Activated CD4-positive, alpha-beta memory T cell treated with anti-CD3 and anti-CD28 coated beads for 36 hours (primary cell): ENCODE measurements at regions of chr1 and their contacts with region 1.

Region 1: DNA sequence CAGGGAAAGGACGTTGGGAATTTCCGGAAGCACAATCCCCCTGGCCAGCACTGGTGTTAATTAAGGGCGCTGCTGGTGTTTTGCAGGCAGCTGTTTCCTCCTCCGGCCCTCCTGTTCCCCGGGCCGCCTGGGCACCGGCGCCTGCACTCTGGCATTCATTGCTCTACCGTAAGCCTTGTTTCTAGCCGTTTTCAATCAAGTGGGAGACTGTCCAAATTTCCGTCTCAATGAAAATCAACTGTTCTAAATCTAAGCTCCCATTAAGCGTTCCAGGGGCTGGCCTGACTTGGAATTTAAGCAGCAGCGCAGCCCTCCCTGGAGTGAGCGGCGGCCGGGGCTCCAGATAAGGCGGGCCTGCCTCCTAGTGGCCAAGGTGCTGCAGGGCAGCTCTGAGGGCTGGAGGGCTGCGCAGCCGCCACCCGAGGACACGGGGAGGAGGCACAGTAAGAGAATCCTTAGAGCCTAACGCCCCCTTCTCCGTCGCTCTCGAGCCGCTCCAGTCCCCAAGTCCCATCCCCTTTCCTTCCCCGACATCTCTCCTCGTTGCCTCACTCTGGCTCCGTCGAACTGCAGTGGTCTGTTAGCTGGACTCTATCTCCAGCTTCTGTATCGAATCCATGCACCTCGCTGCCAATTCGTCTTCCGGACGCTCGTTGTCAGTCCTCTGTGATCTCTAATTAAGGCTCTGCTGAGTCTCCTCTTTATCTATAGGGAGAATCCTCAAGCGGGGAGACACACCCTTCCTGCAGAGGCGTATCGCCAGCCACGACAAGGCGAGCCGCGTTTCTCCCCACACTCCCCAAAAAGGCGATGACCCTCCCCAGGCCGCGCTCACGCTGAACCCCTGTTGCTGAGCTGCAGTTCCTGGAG is 57.8 kb upstream of the LRRC8D start:
- DNase-seq: peak; percentile 91
- H3K4me3 Mint-ChIP-seq: peak overlapping the region; percentile 72
- H3K27ac Mint-ChIP-seq: peak overlapping the region; percentile 80
- H3K4me1 Mint-ChIP-seq: peaks cover 46% of the 10 kb centered on the region
- H3K27me3 Mint-ChIP-seq: no peaks in the 10 kb centered on the region

Region 2: DNA sequence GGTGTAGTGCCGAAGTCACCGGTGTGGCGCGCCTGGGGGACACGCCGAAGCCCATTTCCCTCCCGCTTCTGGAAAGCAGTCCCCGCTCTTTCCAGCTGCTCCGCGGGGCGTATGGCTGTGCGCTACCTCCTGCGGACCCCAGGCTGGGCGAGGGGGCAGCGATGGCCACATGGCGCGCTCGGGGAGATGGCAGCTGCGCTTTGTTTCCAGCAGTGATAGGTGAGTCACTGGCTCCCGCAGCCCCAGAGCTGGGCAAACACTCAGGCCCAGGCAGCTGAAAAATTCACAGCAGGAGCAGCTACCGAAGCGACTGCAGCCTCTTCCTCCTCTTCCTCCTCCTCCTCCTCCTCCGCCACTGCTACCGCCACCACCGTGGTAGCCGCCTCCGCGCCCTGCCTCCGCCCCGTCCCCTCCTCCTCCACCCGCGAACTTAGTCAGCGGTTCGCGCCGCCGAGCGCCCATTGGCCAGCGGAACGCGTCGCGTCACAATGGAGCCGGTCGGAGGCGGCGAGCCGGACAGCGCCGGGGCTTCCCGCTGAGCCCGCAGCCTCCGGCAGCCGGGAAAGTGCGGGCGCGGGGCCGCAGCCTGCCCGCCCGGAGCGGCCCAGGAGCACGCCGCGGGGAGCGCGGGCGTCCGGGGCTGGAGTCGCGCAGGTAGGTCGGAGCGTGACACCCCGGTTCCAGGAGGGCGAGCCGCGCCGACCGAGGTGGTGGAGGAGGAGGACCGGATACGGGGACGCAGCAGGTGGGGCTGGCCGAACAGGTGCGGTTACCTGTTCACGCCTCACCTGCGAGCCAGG is 238.4 kb before region 1 on chr1 and contains the start of gene LRRC8B:
- CTCF ChIA-PET with region 1: interaction called, 18 read pairs
- POLR2A ChIA-PET with region 1: interaction called, 3 read pairs
- intact Hi-C with region 1: loop called (anchors 1 kb)
- DNase-seq: peak; percentile 93
- H3K4me3 Mint-ChIP-seq: no peak within 1 kb of the TSS
- H3K27ac Mint-ChIP-seq: no peak within 1 kb of the TSS
- H3K4me1 Mint-ChIP-seq: peaks cover 31% of the 10 kb centered on the region
- H3K27me3 Mint-ChIP-seq: no peaks in the 10 kb centered on the region
- total RNA-seq, gene LRRC8B: 41.1 to 42.1 TPM

Region 3: DNA sequence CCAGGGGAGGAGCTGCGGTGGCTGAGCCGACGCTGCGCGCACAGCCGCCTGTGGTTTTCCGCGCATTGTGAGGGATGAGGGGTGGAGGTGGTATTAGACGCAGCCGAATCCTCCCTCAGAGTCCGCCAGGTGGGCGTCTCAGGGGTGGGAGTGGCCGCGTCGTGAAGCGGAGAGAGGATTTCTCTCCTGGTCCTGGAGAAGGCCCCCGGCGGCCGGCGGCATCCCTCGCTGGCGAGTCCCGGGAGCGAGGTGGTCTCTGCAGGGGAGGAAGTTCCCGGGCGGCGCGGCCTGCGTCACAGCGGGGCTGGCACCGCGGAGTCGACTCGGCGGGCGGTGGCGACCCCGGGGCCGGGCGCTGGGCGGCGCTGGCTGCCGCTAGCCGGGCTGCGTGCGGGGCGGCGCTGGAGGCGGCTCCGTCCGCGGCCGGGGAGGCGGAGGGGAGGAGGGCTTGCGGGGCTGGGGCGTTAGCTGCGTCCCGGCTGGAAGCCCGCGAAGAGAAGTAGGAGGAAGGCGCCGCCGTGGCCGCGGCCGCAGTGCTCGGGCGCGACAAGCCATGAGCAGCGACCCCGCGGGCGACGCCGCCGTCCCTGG is 130.3 kb before region 1 on chr1 and contains the start of gene LRRC8C:
- CTCF ChIA-PET with region 1: interaction called, 154 read pairs
- POLR2A ChIA-PET with region 1: interaction called, 15 read pairs
- intact Hi-C with region 1: loop called (anchors 1 kb)
- DNase-seq: peak; percentile 90
- H3K4me3 Mint-ChIP-seq: peak within 1 kb of the TSS; percentile 93
- H3K27ac Mint-ChIP-seq: peak within 1 kb of the TSS; percentile 95
- H3K4me1 Mint-ChIP-seq: peaks cover 68% of the 10 kb centered on the region
- H3K27me3 Mint-ChIP-seq: no peaks in the 10 kb centered on the region
- total RNA-seq, gene LRRC8C: 36.4 to 40.4 TPM

Region 4: DNA sequence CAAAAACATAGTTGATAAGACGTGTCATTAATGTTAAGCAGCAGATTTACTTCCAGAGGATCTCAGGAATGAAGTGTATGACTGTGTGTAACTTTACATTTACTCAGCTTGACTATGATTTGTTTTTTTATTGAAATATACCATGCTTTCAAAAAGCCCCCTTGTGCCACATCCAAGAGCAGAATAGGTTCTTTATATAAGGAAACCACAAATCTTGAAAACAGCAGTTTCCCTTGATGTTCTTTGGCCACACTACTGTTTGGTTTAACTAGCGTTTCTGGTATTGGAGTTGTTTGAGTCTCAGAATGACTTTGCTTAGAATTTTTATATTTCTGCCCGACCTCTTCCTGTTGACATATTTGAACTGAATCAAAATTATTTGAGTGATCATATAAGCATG is 105.1 kb before region 1 on chr1:
- CTCF ChIA-PET with region 1: interaction called, 22 read pairs
- POLR2A ChIA-PET with region 1: interaction called, 3 read pairs
- intact Hi-C with region 1: no loop called
- DNase-seq: no peak
- H3K4me3 Mint-ChIP-seq: no peak overlapping the region
- H3K27ac Mint-ChIP-seq: peak overlapping the region; percentile 68
- H3K4me1 Mint-ChIP-seq: peaks cover 92% of the 10 kb centered on the region
- H3K27me3 Mint-ChIP-seq: no peaks in the 10 kb centered on the region

Region 5: GRCh38 chr1:89692601-89693521 is 70.2 kb before region 1 on chr1:
- CTCF ChIA-PET with region 1: interaction called, 16 read pairs
- POLR2A ChIA-PET with region 1: no interaction called
- intact Hi-C with region 1: no loop called
- DNase-seq: no peak
- H3K4me3 Mint-ChIP-seq: no peak overlapping the region
- H3K27ac Mint-ChIP-seq: peak overlapping the region; percentile 86
- H3K4me1 Mint-ChIP-seq: peaks cover 93% of the 10 kb centered on the region
- H3K27me3 Mint-ChIP-seq: no peaks in the 10 kb centered on the region

Region 6: GRCh38 chr1:89728381-89728780 is 34.6 kb before region 1 on chr1:
- CTCF ChIA-PET with region 1: interaction called, 14 read pairs
- POLR2A ChIA-PET with region 1: interaction called, 4 read pairs
- intact Hi-C with region 1: no loop called
- DNase-seq: no peak
- H3K4me3 Mint-ChIP-seq: no peak overlapping the region
- H3K27ac Mint-ChIP-seq: no peak overlapping the region
- H3K4me1 Mint-ChIP-seq: peaks cover 87% of the 10 kb centered on the region
- H3K27me3 Mint-ChIP-seq: no peaks in the 10 kb centered on the region

Region 7: GRCh38 chr1:89812992-89813391 is 50.0 kb after region 1 on chr1:
- CTCF ChIA-PET with region 1: no interaction called
- POLR2A ChIA-PET with region 1: no interaction called
- intact Hi-C with region 1: no loop called
- DNase-seq: no peak
- H3K4me3 Mint-ChIP-seq: no peak overlapping the region
- H3K27ac Mint-ChIP-seq: no peak overlapping the region
- H3K4me1 Mint-ChIP-seq: no peaks in the 10 kb centered on the region
- H3K27me3 Mint-ChIP-seq: peaks cover 3% of the 10 kb centered on the region

Region 8: DNA sequence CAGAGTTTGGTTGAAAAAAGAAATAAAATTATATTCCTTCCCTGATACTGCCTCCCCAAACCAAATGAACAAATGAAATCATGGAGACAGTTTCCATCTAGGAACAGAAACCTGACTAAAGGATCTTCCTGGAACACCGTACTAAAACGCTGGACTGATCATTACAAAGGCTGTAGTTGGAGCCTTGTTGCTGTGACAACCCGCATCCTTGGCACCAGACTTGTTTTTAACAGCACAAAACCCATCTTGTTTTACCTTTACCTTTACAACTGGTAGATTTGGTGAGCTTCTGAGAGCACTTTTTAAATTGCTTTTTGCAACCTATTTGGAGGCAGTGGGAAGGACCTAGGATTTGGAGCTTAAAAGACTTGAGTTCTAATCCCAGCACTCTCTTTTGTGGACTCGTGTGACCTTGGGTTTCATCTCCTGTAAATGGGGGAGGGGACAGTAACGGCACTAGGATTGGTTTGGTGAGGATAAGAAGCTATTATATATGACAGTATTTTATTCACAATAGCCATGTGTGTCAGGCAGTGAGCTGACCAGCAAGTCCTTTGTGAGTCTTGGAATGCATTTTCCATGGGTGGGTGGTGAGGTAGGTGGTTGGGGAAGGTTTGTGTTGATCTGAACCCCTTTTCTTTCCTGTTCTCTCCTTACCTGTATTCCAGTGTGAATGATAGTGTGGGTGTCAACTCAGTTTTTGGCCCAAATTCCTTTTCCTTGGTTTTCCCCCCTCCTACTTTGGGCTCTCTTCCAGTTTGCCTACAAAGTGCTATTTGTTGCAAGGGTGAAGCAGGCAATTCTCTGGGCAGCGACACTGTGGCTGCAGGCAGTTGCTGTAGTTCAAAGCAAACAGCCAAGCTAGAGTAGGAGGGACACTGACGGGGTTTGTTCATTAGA is 70.4 kb after region 1 on chr1:
- CTCF ChIA-PET with region 1: no interaction called
- POLR2A ChIA-PET with region 1: no interaction called
- intact Hi-C with region 1: no loop called
- DNase-seq: no peak
- H3K4me3 Mint-ChIP-seq: no peak overlapping the region
- H3K27ac Mint-ChIP-seq: no peak overlapping the region
- H3K4me1 Mint-ChIP-seq: peaks cover 6% of the 10 kb centered on the region
- H3K27me3 Mint-ChIP-seq: no peaks in the 10 kb centered on the region

Region 9: GRCh38 chr1:90357995-90358394 is 595.0 kb after region 1 on chr1:
- CTCF ChIA-PET with region 1: no interaction called
- POLR2A ChIA-PET with region 1: no interaction called
- intact Hi-C with region 1: no loop called
- DNase-seq: no peak
- H3K4me3 Mint-ChIP-seq: no peak overlapping the region
- H3K27ac Mint-ChIP-seq: no peak overlapping the region
- H3K4me1 Mint-ChIP-seq: no peaks in the 10 kb centered on the region
- H3K27me3 Mint-ChIP-seq: peaks cover 1% of the 10 kb centered on the region